A549 (cell line): ENCODE measurements at regions of chr5 and their contacts with region 1.

Region 1: DNA sequence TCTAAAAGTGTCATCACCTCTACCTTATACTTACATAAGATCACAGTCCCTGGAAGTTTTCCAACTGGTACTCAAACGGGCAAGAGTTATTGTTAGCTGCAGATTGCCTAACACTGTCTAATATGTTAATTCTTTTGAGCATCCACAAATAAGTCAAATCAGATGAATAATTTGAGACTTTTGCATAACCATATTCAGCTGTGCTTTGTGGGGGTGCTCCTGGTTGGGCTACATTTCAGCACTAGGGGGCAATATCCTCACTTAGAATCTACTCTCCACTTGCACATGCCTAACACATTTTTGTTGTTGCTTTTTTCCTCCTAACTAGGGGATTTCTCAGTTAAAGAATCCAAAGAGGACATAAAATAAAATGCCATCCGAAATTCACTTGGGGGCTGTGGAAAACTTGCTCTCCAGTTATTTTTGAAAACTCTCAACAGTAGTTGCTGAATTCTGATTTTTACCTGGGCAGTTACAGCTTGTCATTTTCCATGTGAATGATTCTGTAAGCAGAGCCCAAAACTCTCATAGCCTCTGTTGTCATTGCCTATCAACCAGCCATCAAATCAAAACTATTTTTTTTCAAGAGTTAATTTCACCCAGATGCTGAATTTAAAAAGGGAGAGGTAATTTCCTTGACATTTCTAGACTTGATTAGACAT is 71.5 kb downstream of the TRIM36 start:
- DNase-seq: peak; percentile 44 to 52
- ATAC-seq: peak; percentile 96 to 97
- H3K4me3 ChIP-seq: no peak overlapping the region
- H3K27ac ChIP-seq: no peak overlapping the region
- H3K4me1 ChIP-seq: peaks cover 8% of the 10 kb centered on the region; the same call in 1 of the 3 replicates
- CTCF ChIP-seq: peak; percentile 82
- EP300 ChIP-seq: no peak
- POLR2A ChIP-seq: no peak
- RAD21 ChIP-seq: peak; percentile 78 to 85

Region 2: GRCh38 chr5:115084246-115084793 is 13.9 kb before region 1 on chr5:
- CTCF ChIA-PET with region 1: interaction called, 13 read pairs
- POLR2A ChIA-PET with region 1: no interaction called
- DNase-seq: no peak
- ATAC-seq: no peak
- H3K4me3 ChIP-seq: no peak overlapping the region
- H3K27ac ChIP-seq: no peak overlapping the region
- H3K4me1 ChIP-seq: no peaks in the 10 kb centered on the region
- CTCF ChIP-seq: no peak
- EP300 ChIP-seq: no peak
- POLR2A ChIP-seq: no peak
- RAD21 ChIP-seq: no peak

Region 3: GRCh38 chr5:115109840-115110239 is 11.7 kb after region 1 on chr5:
- CTCF ChIA-PET with region 1: interaction called, 12 read pairs
- POLR2A ChIA-PET with region 1: no interaction called
- DNase-seq: no peak
- ATAC-seq: no peak
- H3K4me3 ChIP-seq: no peak overlapping the region
- H3K27ac ChIP-seq: no peak overlapping the region
- H3K4me1 ChIP-seq: no peaks in the 10 kb centered on the region
- CTCF ChIP-seq: no peak
- EP300 ChIP-seq: no peak
- POLR2A ChIP-seq: no peak
- RAD21 ChIP-seq: no peak

Region 4: DNA sequence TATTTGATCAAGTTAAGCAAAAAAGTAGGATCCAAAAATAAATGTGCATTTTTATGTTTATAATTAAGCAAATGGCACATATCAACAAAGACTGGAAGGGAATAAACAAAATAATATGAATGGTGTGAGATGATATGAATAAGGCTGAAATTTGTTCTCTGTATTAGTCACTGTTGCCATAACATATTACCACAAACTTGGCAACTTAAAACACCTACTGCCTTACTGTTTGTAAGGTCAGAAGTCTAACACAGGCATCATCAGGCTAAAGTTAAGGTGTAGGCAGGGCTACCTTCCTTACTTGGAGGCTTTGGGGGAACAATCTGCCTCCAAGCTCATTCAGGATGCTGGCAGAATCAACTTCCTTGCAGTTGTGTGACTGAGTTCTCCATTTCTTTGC is 145.2 kb after region 1 on chr5:
- CTCF ChIA-PET with region 1: interaction called, 11 read pairs
- POLR2A ChIA-PET with region 1: no interaction called
- DNase-seq: peak in 1 of 2 experiments; percentile 3
- ATAC-seq: peak in 1 of 2 experiments; percentile 39; a peak in 1 of 6 replicates
- H3K4me3 ChIP-seq: no peak overlapping the region
- H3K27ac ChIP-seq: no peak overlapping the region
- H3K4me1 ChIP-seq: no peaks in the 10 kb centered on the region
- CTCF ChIP-seq: no peak
- EP300 ChIP-seq: no peak
- POLR2A ChIP-seq: no peak
- RAD21 ChIP-seq: no peak